ENCODE measurements at regions of chr1 and their contacts with region 1.

Region 1: DNA sequence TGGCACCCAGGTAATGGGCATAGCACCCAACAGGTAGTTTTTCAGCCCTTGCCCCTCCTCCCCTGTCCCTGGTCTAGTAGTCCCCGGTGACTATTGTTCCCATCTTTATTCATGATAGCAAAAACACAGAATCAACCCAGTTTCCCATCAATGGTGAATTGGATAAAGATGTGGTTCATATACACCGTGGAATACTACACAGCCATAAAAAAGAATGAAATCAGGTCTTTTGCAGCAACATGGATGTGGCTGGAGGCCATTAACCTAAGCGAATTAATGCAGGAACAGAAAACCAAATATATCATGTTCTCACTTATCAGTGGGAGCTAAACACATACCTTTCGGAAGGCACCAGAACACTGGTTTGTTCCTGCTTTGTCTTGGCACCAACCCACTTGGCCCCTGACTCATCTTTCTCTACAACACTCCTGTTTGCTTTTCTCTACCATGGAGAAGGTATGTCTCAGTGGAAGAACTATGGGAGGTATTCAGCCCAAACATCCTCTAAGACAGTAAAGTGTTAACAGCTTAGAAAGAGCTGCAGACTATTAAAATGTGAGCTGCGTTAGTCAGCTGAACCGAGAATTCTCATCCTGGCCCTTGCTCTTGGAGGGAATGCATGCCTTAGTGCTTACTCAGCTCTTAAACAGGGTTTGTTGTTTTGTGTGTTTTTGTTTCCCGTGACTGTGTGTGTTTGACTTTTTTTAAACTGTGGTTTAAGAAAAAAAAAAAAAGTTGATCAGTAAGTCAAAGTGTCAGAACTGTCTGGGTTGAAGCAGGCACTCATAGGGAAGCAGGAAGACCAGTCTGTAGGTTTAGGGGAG is 203.0 kb downstream of the TOMM20 start:
- DNase-seq: peak; percentile 17
- H3K4me3 Mint-ChIP-seq: peak overlapping the region; percentile 74
- H3K27ac Mint-ChIP-seq: peak overlapping the region; percentile 97
- H3K4me1 Mint-ChIP-seq: peaks cover 64% of the 10 kb centered on the region
- H3K27me3 Mint-ChIP-seq: no peaks in the 10 kb centered on the region

Region 2: GRCh38 chr1:234544087-234544579 is 381.5 kb before region 1 on chr1:
- intact Hi-C with region 1: no loop called
- DNase-seq: no peak
- H3K4me3 Mint-ChIP-seq: peak overlapping the region; percentile 1
- H3K27ac Mint-ChIP-seq: peak overlapping the region; percentile 36
- H3K4me1 Mint-ChIP-seq: peaks cover 43% of the 10 kb centered on the region
- H3K27me3 Mint-ChIP-seq: no peaks in the 10 kb centered on the region

Region 3: GRCh38 chr1:234772345-234773147 is 153.1 kb before region 1 on chr1:
- intact Hi-C with region 1: loop called (anchors 1 kb)
- DNase-seq: peak; percentile 83
- H3K4me3 Mint-ChIP-seq: peak overlapping the region; percentile 80
- H3K27ac Mint-ChIP-seq: peak overlapping the region; percentile 100
- H3K4me1 Mint-ChIP-seq: peaks cover 56% of the 10 kb centered on the region
- H3K27me3 Mint-ChIP-seq: no peaks in the 10 kb centered on the region

Region 4: GRCh38 chr1:234875953-234876855 is 49.4 kb before region 1 on chr1:
- intact Hi-C with region 1: loop called (anchors 1 kb)
- DNase-seq: no peak
- H3K4me3 Mint-ChIP-seq: peak overlapping the region; percentile 11
- H3K27ac Mint-ChIP-seq: peak overlapping the region; percentile 88
- H3K4me1 Mint-ChIP-seq: peaks cover 55% of the 10 kb centered on the region
- H3K27me3 Mint-ChIP-seq: no peaks in the 10 kb centered on the region

Region 5: GRCh38 chr1:234881893-234882771 is 43.5 kb before region 1 on chr1:
- intact Hi-C with region 1: loop called (anchors 1 kb)
- DNase-seq: no peak
- H3K4me3 Mint-ChIP-seq: no peak overlapping the region
- H3K27ac Mint-ChIP-seq: peak overlapping the region; percentile 47
- H3K4me1 Mint-ChIP-seq: peaks cover 69% of the 10 kb centered on the region
- H3K27me3 Mint-ChIP-seq: no peaks in the 10 kb centered on the region

Region 6: GRCh38 chr1:234893725-234894630 is 31.7 kb before region 1 on chr1:
- intact Hi-C with region 1: loop called (anchors 2 kb)
- DNase-seq: no peak
- H3K4me3 Mint-ChIP-seq: peak overlapping the region; percentile 33
- H3K27ac Mint-ChIP-seq: peak overlapping the region; percentile 75
- H3K4me1 Mint-ChIP-seq: peaks cover 60% of the 10 kb centered on the region
- H3K27me3 Mint-ChIP-seq: peaks cover 2% of the 10 kb centered on the region